Posterior cingulate gyrus (tissue), 11 donors: ENCODE measurements at regions of chr3 and their contacts with region 1.

Region 1: GRCh38 chr3:160027541-160028195 is 39.0 kb downstream of the IL12A start:
- DNase-seq: no peak

Region 2: GRCh38 chr3:160343132-160343531 is 315.5 kb after region 1 on chr3:
- intact Hi-C with region 1: loop called (anchors 2 kb)
- DNase-seq: no peak

Region 3: DNA sequence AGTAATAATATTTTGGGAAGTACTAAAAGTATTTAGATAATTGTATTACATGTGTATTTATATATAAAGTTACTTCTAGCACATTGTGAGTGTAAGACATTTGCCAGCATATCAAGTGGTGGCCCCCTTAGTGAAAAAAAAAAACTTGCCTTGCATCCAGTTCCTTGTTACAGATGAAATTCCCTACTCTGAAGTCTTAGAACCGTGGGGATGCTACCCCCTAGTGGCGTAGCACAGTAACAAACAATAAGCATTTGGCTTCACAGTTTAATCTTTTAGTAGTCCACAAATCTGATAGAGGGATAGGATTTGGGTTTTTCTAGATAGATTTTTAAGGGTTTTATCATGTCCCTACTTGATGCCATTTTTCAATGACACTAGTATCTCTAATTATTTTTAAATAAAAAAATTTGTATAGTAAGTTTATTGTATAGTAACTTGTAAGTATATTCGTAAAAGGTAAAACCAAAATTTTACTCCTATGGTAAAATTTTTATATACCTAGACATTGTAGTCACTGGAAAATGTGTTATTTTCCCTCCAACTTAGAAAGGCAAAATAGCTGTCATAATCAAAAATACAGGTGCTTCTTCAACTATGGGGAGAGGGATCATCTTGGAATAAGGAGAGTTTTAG is 386.1 kb after region 1 on chr3:
- intact Hi-C with region 1: loop called (anchors 1 kb)
- DNase-seq: peak in 7 of 10 donors; percentile 35 to 89 (median 67)